Activated T-helper 1 cell treated with anti-CD3 and anti-CD28 coated beads, Interleukin-12 subunit alpha, Interleukin-12 subunit beta, Interleukin-2, Interleukin-4 antibody, amounts not matched to agents 30 ng/mL and 10 ng/mL and 1 ng/mL, durations not matched to agents 14 hours and 24 hours and 36 hours (primary cell): ENCODE measurements at regions of chr9 and their contacts with region 1.

Region 1: DNA sequence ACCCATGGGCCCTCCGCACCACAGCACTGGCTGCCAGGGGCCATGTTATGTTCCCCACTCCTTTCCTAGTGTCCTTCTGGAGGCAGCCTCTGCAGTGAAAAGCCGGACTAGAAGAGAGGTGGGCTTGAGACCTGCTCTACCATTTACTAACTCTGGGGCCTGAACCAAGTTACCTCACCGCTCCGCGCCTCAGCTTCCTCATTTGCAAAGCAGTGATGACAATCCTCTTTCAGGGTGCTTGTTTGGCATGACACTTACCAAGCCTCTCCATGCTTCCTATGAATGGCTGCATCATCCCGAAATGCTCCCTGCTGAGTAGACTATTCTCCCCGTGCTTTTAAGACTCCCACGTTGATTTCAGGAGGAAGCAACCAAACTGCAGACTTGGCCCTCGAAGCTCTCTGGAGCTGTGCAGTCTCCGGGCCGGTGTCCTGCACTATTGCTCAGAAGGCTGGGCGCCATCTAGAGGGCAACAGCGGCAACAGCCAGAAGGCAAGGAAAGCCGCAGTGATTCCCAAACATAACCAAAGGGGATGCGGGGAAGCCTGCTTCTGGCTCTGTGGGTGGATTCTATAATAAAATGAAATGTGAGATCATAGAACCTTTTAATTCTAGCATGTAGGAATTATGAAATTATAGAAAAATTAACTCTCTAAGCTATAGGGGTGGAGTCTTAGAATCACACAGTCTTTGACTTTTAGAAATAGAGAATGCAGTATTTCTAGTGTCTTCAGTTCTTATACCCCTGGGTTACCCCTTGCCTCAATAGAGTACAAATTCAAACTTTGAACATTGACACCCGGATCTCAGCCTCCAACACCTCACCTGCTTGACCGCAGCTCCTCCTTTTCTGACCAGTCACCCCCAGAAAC is 599.8 kb upstream of the BRINP1 start:
- DNase-seq: peak; percentile 23
- H3K4me3 Mint-ChIP-seq: no peak overlapping the region
- H3K27ac Mint-ChIP-seq: no peak overlapping the region
- H3K4me1 Mint-ChIP-seq: no peaks in the 10 kb centered on the region
- H3K27me3 Mint-ChIP-seq: no peaks in the 10 kb centered on the region

Region 2: DNA sequence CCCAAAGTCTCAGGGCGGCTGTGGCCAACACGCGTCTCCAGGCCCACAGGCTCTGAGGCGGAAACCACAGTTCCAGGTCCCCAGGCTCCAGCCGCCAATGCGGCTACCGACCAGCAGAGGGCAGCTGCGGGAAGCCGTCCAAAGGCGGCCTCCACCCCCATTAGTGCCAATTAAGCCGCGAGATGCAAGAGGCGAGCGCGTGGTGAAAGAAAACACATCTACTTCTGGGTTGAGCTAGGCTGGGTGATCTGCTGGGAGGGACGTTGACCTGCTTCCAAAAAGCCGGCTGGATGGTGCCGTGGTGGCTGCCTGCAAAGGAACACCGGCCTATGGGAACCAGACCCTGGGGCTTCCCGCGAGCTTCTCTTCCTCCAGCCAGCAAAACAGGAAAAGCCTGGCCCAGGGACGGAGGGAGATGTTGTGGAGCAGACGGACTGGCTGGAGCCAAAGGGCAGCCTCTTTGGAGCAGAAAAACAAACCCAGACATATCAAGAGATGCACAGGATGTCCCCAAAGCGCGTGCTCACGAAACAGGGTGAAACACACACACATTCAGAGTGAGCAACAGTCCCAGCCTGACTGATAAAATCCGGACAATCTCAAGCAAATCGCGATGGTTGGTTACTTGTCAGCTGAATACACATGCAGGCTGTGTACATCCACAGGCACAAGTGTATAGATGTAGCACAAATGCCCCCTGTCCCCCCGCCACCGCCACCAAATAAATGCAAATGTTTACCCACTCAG is 412.8 kb before region 1 on chr9:
- intact Hi-C with region 1: loop called (anchors 1 kb)
- DNase-seq: peak; percentile 38
- H3K4me3 Mint-ChIP-seq: peak overlapping the region; percentile 6
- H3K27ac Mint-ChIP-seq: no peak overlapping the region
- H3K4me1 Mint-ChIP-seq: peaks cover 6% of the 10 kb centered on the region
- H3K27me3 Mint-ChIP-seq: peaks cover 6% of the 10 kb centered on the region

Region 3: GRCh38 chr9:119924742-119925141 is 44.3 kb before region 1 on chr9:
- intact Hi-C with region 1: no loop called
- DNase-seq: no peak
- H3K4me3 Mint-ChIP-seq: no peak overlapping the region
- H3K27ac Mint-ChIP-seq: no peak overlapping the region
- H3K4me1 Mint-ChIP-seq: no peaks in the 10 kb centered on the region
- H3K27me3 Mint-ChIP-seq: no peaks in the 10 kb centered on the region

Region 4: DNA sequence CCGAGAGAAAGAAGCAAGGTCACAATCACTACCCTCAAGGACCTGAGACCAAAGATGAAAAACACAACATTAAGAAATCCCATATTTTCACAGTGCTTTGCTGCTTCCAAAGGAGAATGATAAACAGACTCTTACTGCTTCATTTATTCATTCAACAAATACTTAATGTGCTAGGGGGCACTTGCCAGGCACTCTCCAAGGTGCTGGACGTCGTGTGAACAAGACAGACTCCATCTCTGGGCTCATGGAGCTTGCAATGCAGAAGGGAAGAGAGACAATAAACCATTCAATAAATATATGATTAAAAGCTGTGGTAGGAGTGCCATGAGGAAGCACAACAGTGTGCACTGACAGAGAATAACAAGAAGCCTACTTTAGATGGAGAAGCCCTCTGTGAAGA is 283.2 kb after region 1 on chr9:
- intact Hi-C with region 1: no loop called
- DNase-seq: no peak
- H3K4me3 Mint-ChIP-seq: no peak overlapping the region
- H3K27ac Mint-ChIP-seq: no peak overlapping the region
- H3K4me1 Mint-ChIP-seq: no peaks in the 10 kb centered on the region
- H3K27me3 Mint-ChIP-seq: peaks cover 6% of the 10 kb centered on the region

Region 5: GRCh38 chr9:120531683-120532300 is 562.7 kb after region 1 on chr9:
- intact Hi-C with region 1: loop called (anchors 10 kb)
- DNase-seq: no peak
- H3K4me3 Mint-ChIP-seq: no peak overlapping the region
- H3K27ac Mint-ChIP-seq: no peak overlapping the region
- H3K4me1 Mint-ChIP-seq: no peaks in the 10 kb centered on the region
- H3K27me3 Mint-ChIP-seq: no peaks in the 10 kb centered on the region